Caco-2 (cell line): ENCODE measurements at regions of chr20 and their contacts with region 1.

Region 1: DNA sequence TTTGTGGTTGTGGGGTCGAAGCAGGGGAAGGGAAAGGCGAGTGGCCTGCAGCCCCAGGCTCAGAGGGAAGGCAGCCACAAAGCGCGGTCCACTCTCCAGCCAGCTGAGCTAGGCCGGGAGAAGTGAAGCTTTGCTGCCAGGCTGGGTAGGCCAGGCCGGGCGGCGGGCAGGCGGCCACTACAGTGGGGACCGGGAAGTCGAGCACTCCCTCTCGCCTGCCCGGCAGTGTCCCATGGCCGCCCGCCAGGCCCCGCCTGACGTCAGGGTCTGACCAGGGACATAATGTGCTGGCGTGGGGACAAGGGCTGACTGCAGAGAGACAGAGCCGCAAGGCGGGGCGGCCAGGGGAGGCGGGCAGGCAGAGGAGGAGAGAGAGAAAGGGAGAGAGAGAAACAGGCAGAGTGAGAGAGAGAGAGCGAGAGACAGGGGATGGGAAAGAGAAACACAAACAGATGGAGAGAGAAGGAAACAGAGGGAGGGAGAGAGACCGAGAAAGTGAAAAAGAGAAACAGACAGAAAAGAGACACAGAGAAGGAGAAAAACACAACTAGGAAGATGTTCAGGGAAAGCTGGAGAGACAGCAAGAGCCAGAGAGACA is 94.6 kb upstream of the PTPN1 start:
- DNase-seq: peak in 1 of 2 experiments; percentile 45
- H3K4me3 ChIP-seq: no peak overlapping the region
- H3K4me3 Mint-ChIP-seq: no peak overlapping the region
- H3K27ac Mint-ChIP-seq: peak overlapping the region; percentile 32
- H3K4me1 ChIP-seq: peaks cover 28% of the 10 kb centered on the region
- H3K4me1 Mint-ChIP-seq: peaks cover 35% of the 10 kb centered on the region
- H3K27me3 ChIP-seq: no peaks in the 10 kb centered on the region
- H3K27me3 Mint-ChIP-seq: no peaks in the 10 kb centered on the region
- CTCF ChIP-seq: no peak

Region 2: DNA sequence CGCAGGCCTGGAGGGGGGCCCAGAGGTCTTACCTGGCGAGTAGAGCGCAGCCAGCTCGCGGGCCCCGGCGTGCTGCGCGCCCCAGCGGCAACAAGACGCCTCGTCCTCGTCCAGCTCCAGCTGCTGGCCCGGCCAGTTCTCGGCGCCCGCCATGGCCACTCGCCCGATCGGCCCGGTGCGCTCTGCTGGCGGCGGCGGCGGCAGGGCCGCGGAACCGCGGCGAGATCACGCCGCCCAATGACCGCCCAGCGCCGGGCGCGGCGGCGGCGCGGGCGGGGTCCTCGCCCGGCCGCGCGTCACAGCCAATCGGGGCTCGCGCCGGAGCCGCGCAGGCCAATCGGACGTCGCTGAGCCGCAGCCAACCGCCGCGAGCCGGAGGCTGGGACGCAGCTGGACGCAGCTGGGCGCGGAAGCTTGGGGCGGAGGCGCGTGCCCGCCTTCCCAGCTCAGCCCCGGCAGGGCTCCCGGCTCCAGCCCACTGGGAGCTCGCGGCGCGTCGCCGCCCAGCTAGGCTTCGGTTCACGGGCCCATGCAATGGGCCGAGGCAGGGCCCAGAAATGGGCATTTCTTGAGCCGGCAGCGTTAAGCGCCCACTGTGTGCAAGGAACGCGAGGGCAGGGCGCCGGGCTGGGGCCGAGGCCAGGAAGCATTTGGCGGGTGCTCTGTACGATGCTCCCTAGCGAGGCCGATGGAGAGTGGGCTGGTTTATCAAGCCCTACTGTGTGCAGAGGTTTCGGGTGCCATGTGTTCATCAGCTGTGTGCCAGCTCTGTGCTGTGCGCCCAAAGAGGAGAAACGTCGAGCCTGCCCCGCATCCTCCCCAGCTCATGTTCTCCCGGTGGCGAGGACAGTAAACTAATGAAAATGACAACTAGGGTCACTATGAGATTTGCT is 261.9 kb before region 1 on chr20 and contains the start of gene PEDS1:
- CTCF ChIA-PET with region 1: no interaction called
- POLR2A ChIA-PET with region 1: no interaction called
- intact Hi-C with region 1: no loop called
- DNase-seq: peak; percentile 95 to 99
- H3K4me3 ChIP-seq: peak within 1 kb of the TSS; percentile 96
- H3K4me3 Mint-ChIP-seq: peak within 1 kb of the TSS; percentile 82
- H3K27ac Mint-ChIP-seq: peak within 1 kb of the TSS; percentile 91
- H3K4me1 ChIP-seq: peaks cover 32% of the 10 kb centered on the region
- H3K4me1 Mint-ChIP-seq: peaks cover 45% of the 10 kb centered on the region
- H3K27me3 ChIP-seq: no peaks in the 10 kb centered on the region
- H3K27me3 Mint-ChIP-seq: no peaks in the 10 kb centered on the region
- CTCF ChIP-seq: peak; percentile 0 to 5
- total RNA-seq, gene PEDS1: 78.3 and 84.1 TPM in 2 replicates

Region 3: DNA sequence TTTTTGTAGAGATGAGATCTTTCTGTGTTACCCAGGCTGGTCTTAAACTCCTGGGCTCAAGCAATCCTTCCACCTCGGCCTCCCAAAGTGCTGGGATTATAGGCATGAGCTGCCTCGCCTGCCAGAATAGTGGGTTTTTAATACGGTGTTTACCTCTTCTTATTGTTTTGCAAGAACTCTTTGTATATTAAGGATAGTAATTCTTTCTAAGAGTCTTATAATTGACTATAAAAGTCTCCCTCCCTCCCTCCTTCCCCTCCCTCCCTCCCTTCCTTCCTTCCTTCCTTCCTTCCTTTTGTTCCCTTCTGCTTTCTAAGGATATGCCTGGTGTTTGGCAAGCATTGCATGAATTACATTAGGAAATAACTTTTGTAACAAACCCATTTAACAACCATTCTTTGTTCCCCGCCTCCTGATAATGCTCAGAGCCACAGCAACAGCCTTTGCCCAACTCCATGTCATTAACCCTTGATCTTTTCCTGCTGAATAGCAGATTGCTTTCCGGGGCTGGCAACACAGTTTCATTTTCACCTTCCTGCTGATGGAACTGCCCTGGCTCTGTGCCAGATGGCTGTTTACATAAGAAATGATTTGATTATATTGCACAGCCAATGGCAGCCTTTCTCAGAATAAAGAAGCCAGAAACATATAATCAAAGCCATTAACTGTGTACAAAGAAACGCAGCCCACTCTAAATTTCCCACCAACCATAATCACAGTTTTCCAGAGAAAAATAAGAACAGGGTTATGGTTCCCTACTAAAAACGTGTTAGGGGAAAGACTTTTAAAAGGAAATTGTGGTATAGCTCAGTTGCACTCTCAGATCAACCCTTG is 49.1 kb before region 1 on chr20:
- CTCF ChIA-PET with region 1: no interaction called
- POLR2A ChIA-PET with region 1: no interaction called
- intact Hi-C with region 1: loop called (anchors 5 kb)
- DNase-seq: peak; percentile 66 to 93
- H3K4me3 ChIP-seq: no peak overlapping the region
- H3K4me3 Mint-ChIP-seq: no peak overlapping the region
- H3K27ac Mint-ChIP-seq: peak overlapping the region; percentile 2
- H3K4me1 ChIP-seq: peaks cover 20% of the 10 kb centered on the region
- H3K4me1 Mint-ChIP-seq: peaks cover 24% of the 10 kb centered on the region
- H3K27me3 ChIP-seq: no peaks in the 10 kb centered on the region
- H3K27me3 Mint-ChIP-seq: no peaks in the 10 kb centered on the region
- CTCF ChIP-seq: no peak